ENCODE measurements at regions of chr9 and their contacts with region 1.

Region 1: DNA sequence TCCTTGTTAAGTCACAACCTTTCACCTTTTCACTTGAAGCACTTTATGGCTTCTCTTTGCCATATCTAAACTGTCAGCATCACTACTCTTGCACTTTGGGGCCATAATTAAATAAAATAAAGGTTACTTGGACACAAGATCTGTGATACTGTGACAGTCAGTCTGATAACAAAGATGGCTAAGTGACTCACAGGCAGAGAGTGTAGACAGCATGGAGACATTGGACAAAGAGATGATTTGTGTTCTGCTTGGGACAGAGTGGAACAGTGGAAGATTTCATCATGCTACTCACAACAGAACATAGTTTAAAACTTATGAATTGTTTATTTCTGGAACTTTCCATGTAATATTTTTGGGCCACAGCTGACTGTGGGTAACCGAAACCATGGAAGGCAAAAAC is 81.7 kb upstream of the SMC5 start:
- DNase-seq: no peak
- H3K4me3 ChIP-seq: no peak overlapping the region
- H3K27ac ChIP-seq: no peak overlapping the region
- H3K4me1 ChIP-seq: no peaks in the 10 kb centered on the region
- H3K27me3 ChIP-seq: no peaks in the 10 kb centered on the region
- CTCF ChIP-seq: no peak

Region 2: DNA sequence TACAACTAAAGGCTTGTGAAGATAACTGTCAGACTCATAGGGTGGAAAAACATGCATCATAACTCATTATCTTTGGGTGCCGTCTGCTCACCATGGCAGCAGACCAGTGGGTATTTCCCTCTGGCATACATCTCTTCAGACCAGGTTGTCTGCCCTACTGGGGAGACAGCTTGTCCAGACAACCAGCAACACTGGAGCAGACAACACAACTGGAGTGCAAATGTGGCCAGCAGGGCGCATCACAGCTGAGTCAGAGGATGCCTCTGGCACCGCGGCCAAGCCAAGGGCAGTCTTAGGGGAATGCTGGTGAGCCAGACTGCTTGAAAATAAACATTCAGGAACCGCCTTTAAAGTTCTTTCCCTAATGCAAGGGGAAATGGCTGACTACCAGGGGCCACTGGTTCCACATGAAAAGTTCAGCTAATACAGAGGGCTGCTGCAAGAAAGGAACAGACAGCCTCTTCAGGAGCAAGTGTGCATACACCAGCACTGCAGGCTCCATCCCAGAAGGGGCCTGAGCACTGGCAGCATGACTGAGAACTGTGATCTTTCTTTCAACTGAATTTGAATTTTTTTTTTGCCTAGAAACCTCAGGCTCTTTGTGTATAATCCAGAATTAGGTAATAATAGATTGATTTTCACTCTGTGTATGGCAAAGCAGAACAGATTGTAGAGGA is 56.1 kb before region 1 on chr9:
- CTCF ChIA-PET with region 1: no interaction called
- POLR2A ChIA-PET with region 1: no interaction called
- intact Hi-C with region 1: loop called (anchors 10 kb)
- DNase-seq: peak; percentile 50 to 70
- H3K4me3 ChIP-seq: no peak overlapping the region
- H3K27ac ChIP-seq: no peak overlapping the region
- H3K4me1 ChIP-seq: peaks cover 25% of the 10 kb centered on the region
- H3K27me3 ChIP-seq: no peaks in the 10 kb centered on the region
- CTCF ChIP-seq: no peak

Measured in PC-9 (cell line).